Natural killer cell (primary cell): ENCODE measurements at regions of chr6 and their contacts with region 1.

Region 1: GRCh38 chr6:37262446-37263026 is 4.6 kb upstream of the TMEM217 start:
- DNase-seq: no peak
- ATAC-seq: no peak
- H3K4me3 ChIP-seq: no peak overlapping the region
- H3K4me3 Mint-ChIP-seq: no peak overlapping the region
- H3K27ac ChIP-seq: no peak overlapping the region
- H3K27ac Mint-ChIP-seq: no peak overlapping the region
- H3K4me1 ChIP-seq: peaks cover 13% of the 10 kb centered on the region
- H3K4me1 Mint-ChIP-seq: peaks cover 34 to 46% of the 10 kb centered on the region in 2 donors
- H3K27me3 ChIP-seq: no peaks in the 10 kb centered on the region
- H3K27me3 Mint-ChIP-seq: no peaks in the 10 kb centered on the region
- CTCF ChIP-seq: no peak

Region 2: GRCh38 chr6:37283671-37284151 is 21.2 kb after region 1 on chr6:
- intact Hi-C with region 1: loop called (anchors 1 kb)
- DNase-seq: no peak
- ATAC-seq: no peak
- H3K4me3 ChIP-seq: no peak overlapping the region
- H3K4me3 Mint-ChIP-seq: no peak overlapping the region
- H3K27ac ChIP-seq: no peak overlapping the region
- H3K27ac Mint-ChIP-seq: no peak overlapping the region
- H3K4me1 ChIP-seq: no peaks in the 10 kb centered on the region
- H3K4me1 Mint-ChIP-seq: peaks cover 9 to 17% of the 10 kb centered on the region in 2 donors
- H3K27me3 ChIP-seq: no peaks in the 10 kb centered on the region
- H3K27me3 Mint-ChIP-seq: no peaks in the 10 kb centered on the region
- CTCF ChIP-seq: no peak